Adrenal gland (tissue), 19 donors: ENCODE measurements at regions of chr3 and their contacts with region 1.

Region 1: DNA sequence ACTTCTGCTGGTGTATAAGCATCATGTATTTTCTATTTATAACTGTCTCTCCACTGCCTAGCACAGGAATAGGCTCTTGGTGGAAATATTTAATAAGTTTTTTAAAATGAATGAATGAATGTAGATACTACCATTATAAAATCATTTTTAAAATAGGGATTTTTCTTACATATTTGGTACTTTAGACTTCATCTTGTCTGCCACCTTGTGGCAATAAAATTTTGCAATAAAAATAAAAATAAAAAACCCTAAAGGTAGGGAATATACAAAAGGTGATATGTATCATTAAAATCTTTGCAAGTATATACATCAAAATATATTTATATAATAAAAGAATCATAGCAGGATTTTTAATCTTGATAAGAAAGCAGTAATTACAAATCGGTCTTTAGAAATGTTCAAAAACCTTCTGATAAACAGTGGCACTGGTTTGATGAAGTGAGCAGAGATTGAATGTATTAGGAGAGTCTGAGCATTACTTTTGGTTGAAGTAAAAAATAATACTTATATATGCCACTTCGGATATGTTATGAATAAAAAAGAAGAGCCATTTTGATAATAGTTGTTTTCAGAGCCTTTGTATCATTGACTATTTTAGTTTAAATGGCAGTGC is 95.2 kb downstream of the SPATA16 start:
- DNase-seq: no peak
- H3K4me3 ChIP-seq: no peak overlapping the region
- H3K27ac ChIP-seq: no peak overlapping the region
- H3K4me1 ChIP-seq: no peaks in the 10 kb centered on the region
- H3K27me3 ChIP-seq: no peaks in the 10 kb centered on the region
- CTCF ChIP-seq: peak in 5 of 6 experiments; percentile 33 to 65 (median 49)
- POLR2A ChIP-seq: no peak

Region 2: DNA sequence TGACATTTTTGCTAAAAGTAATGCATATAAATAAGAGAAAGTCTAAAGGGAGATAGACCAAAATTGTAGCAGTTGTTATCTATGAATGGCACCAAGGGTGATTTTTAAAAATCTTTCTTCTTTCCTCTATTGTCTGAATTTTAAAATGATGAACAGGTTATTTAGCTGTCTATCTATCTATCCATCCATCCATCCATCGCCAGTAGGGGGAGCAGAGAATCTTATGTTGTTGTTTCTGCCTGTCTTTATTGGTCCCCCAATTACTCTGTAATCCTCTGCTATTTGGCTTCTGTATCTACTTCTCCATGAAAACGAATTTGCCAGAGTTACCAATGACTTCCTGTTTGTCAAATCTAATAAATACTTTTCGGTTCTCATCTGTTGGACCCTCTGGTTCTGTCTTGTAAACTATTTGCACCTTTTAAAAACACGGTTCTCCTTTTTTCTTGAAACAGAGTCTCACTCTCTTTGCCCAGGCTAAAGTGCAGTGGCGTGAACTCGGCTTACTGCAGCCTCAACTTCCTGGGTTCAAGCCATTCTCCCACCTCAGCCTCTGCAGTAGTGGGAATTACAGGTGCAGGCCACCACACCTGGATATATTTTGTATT is 209.4 kb before region 1 on chr3:
- intact Hi-C with region 1: loop called (anchors 5 to 10 kb)
- DNase-seq: peak; percentile 45 to 80 (median 66)
- H3K4me3 ChIP-seq: no peak overlapping the region
- H3K27ac ChIP-seq: no peak overlapping the region
- H3K4me1 ChIP-seq: no peaks in the 10 kb centered on the region
- H3K27me3 ChIP-seq: no peaks in the 10 kb centered on the region
- CTCF ChIP-seq: peak; percentile 51 to 76 (median 69)
- POLR2A ChIP-seq: no peak

Region 3: DNA sequence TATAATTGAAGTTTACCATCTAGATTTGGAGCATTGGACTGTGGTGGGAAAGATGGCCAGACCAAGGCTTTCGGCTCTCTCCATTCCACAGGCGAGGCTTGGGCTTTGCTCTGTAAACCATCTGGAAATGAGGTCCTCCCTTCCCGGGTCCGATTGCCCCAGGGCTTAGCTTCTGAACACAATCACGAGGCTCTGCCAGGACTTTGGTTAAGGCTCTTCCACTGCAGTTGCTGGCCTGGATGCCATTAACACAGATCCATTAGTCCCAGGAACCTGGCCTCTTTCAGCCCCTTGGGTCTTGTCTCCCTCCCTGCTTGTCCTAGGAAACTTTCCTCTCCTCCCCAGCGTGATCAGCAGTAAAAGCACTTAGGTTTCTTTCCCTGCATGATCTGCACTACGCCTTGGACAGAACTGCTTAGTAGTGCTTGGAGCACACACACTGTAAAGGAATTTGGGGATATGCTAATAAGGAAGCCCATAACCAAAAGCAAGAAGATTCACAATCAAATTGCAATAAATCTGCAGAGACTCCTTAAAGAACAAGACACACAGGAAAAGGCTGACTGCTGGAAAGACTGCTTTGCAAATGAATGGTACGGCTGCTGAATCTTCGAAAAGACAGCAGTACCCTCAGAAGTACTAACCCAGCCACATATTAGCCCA is 141.0 kb before region 1 on chr3:
- intact Hi-C with region 1: no loop called
- DNase-seq: no peak
- H3K4me3 ChIP-seq: no peak overlapping the region
- H3K27ac ChIP-seq: no peak overlapping the region
- H3K4me1 ChIP-seq: no peaks in the 10 kb centered on the region
- H3K27me3 ChIP-seq: no peaks in the 10 kb centered on the region
- CTCF ChIP-seq: no peak
- POLR2A ChIP-seq: no peak